ENCODE measurements at regions of chr13 and their contacts with region 1.

Region 1: DNA sequence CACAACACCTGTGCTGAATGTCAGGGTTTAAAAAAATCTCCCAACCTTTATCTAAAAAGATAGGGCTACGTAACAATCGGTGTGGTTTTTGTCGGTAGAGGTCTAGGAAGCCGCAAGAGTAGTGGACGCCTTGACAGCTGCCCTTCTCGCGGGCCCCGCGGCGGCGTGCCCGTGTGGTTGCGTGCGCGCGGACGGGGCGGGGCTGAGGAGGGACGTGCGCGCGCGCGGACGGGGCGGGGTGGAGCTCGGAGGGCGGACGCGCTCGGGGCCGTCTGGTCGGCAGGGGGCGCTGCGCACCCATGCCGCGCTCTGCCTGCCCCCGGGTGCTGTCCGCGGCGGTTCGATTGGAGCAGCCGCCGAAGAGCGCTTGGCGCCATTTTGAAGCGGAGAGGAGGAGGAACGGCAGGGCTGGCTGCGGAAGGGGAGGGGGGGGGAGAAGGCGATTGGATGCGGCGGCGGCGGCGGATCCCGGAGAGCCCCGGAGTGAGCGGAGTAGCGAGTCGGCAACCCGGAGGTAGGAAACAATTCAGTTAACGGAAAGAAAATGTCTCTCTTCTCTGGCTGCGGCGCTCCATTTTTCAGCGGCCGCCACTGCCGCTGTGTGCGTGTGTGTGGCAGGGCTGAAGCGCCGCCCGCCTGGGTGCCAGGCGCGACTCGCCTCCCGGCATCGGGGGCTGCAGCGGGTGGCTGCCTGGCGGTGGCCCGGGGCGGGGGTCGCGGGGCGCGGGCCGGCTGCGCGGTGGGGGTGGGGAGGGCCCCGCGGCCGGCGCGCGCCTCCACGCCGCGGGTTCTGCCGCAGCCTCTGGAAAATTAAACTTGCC is at the start of gene PDS5B:
- DNase-seq: peak; percentile 86
- H3K4me3 ChIP-seq: peak within 1 kb of the TSS; percentile 87
- H3K27ac ChIP-seq: peak within 1 kb of the TSS; percentile 74
- H3K27me3 ChIP-seq: no peaks in the 10 kb centered on the region
- CTCF ChIP-seq: peak; percentile 61
- polyA plus RNA-seq, gene PDS5B: 12.0 and 16.7 TPM in 2 replicates

Region 2: GRCh38 chr13:32472194-32472621 is 114.1 kb before region 1 on chr13:
- CTCF ChIA-PET with region 1: no interaction called
- POLR2A ChIA-PET with region 1: no interaction called
- DNase-seq: no peak
- H3K4me3 ChIP-seq: no peak overlapping the region
- H3K27ac ChIP-seq: peak overlapping the region; percentile 48
- H3K27me3 ChIP-seq: no peaks in the 10 kb centered on the region
- CTCF ChIP-seq: no peak

Region 3: DNA sequence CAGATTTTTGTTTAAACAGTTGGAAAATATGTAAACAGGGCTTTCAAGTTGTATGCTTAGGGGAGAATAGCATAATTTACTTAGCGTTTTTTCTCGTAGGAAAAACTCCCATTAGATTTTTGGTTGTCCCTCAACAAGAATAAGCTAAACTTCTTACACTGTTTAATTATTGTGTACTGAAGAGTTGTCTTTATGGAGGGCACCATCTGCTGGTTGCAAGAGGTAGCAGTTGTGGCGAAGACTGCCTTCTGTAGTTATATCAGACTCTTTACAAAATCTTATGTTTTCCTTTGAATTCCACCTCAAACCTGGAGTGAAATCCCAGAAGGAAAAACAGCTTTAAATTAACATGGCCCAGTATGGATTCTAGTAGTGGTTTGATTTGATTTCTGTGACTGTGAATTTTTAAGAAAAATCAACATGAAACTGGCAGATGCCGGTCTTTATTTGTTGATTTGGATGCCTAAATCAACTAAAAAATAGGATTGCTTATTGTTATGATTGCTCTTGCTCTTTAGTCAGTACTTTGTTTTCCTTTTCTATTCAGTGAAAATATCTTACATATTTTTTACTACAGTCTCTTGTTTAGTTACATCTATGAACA is 53.3 kb after region 1 on chr13:
- CTCF ChIA-PET with region 1: interaction called, 31 read pairs
- POLR2A ChIA-PET with region 1: interaction called, 5 read pairs
- DNase-seq: peak; percentile 24
- H3K4me3 ChIP-seq: no peak overlapping the region
- H3K27ac ChIP-seq: no peak overlapping the region
- H3K27me3 ChIP-seq: no peaks in the 10 kb centered on the region
- CTCF ChIP-seq: peak; percentile 86

Region 4: DNA sequence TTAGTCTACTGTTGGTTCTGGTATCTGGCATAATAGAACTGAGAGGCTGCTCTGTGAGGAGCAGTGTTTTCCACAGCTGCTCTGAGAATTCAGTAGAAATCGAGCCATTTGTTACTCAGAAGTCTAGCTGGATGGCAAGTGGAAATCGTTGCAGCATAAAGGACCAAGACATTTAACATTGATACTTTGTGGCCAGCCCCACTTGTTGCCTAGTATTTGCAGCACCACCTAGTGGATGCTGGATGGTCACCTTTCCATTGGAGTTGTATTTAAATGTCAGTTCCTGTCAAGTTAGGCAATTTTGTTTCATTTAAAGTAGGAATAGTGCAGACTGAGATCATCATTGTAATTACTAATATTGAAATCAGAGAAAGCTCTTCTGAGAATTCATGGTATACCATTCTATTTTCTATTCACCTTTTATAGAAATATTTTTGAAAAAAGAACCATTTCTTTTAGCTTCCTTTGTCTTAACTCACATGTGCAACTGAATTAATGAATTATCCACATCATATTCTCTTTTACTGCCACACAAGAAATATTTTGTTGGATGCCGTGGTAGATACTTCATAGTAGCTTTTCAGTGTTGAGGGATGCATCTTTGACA is 64.5 kb after region 1 on chr13:
- CTCF ChIA-PET with region 1: interaction called, 16 read pairs
- POLR2A ChIA-PET with region 1: interaction called, 4 read pairs
- DNase-seq: no peak
- H3K4me3 ChIP-seq: no peak overlapping the region
- H3K27ac ChIP-seq: no peak overlapping the region
- H3K27me3 ChIP-seq: no peaks in the 10 kb centered on the region
- CTCF ChIP-seq: peak; percentile 75

Region 5: DNA sequence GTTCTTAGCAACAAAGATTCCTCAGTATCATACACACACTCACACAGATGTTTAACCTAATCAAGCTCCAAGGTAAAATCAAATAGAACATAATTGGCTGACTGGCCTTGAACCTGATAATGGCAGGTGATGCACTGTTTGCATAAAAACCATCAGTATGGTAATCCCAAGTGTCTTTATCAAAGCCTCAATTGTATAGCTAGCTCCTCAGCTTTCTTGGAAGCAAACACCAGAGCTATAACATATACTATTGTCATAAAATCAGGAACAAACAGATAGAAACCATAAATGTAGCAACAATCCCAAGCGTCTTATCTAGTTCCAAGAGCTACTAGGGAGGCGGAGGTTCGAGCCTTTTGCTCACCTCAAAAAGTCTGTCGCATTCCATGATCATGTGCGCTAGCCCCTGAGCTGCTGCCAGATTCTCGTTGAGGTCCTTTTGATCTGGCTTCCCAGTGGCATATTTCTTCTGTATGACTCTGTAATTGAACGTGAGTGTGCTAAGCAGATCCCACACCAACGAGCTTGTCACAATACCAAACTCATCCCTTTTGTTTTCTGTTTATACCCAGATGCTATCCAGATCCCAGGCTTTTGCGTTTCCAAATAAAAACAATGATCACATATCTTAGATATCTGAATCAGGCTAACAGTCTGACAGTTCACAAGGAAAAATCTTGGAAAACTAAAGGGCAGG is 525.3 kb after region 1 on chr13:
- CTCF ChIA-PET with region 1: interaction called, 22 read pairs
- POLR2A ChIA-PET with region 1: no interaction called
- DNase-seq: no peak
- H3K4me3 ChIP-seq: no peak overlapping the region
- H3K27ac ChIP-seq: peak overlapping the region; percentile 33
- H3K27me3 ChIP-seq: no peaks in the 10 kb centered on the region
- CTCF ChIP-seq: no peak

Measured in AG04450 (cell line).